Activated naive CD4-positive, alpha-beta T cell treated with anti-CD3 and anti-CD28 coated beads for 36 hours (primary cell): ENCODE measurements at regions of chr19 and their contacts with region 1.

Region 1: DNA sequence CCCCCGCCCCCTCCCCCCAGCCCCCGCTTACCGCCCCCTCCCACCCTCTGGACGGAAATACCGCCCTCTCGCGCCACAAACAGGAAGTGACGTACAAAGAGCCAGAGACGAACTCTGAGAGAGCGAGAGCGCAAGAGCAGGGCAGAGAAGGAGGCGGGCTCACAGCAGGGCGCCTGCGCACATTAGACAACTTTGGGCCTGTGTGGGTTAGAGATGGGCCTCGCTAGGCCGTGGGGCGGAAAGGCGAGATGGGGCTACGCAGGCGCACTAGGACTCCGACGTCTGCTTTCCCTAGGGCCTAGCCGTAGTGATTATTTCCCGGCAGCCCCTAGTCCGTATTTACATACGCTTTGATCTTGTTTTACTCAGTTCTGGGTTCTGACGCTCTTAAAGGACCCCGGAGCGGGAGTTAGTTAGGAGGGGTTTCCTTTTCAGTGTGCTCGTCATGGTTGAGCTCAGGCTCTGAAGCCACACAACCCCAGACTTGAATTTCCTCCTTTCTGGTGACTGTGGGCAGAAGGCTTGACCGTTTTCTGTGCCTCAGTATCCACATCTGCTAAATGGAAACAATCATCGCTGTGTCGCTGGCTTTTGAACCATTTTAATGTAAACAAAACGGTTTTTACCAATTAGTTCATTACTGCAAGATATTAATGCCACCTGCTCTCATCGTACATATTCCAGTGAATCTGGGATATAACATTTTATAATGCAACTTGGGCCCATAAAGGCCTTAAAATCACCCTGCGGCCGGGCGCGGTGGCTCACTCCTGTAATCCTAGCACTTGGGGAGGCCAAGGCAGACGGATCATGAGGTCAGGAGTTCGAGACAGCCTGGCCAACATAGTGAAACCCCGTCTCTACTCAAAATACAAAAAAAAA is 449 bp upstream of the AKT2 start:
- DNase-seq: peak; percentile 99
- H3K4me3 Mint-ChIP-seq: peak overlapping the region; percentile 97
- H3K27ac Mint-ChIP-seq: peak overlapping the region; percentile 99
- H3K4me1 Mint-ChIP-seq: peaks cover 47% of the 10 kb centered on the region
- H3K27me3 Mint-ChIP-seq: no peaks in the 10 kb centered on the region

Region 2: GRCh38 chr19:40190891-40191835 is 94.4 kb before region 1 on chr19 and contains the start of gene MAP3K10:
- CTCF ChIA-PET with region 1: no interaction called
- intact Hi-C with region 1: loop called (anchors 2 kb)
- DNase-seq: peak; percentile 79
- H3K4me3 Mint-ChIP-seq: peak within 1 kb of the TSS; percentile 85
- H3K27ac Mint-ChIP-seq: peak within 1 kb of the TSS; percentile 91
- H3K4me1 Mint-ChIP-seq: peaks cover 30% of the 10 kb centered on the region
- H3K27me3 Mint-ChIP-seq: no peaks in the 10 kb centered on the region
- total RNA-seq, gene MAP3K10: 8.4 to 9.3 TPM

Region 3: DNA sequence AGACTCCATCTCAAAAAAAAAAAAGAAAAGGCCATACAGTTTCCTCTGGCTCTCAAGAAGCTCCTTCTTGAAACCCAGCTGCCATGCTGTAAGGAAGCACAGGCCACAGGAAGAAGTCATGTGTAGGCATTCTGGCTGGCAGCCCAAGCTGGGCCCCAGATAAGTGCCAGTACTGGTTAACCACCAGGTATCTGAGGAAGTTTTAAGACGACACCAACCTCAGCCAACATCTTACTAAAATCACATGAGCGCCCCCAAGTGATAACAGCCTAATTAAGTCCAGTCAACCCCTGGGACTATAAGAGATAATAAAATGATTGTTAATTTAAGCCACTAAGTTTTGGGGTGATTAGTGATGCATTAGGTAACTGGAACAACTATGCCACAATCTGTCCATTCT is 26.9 kb after region 1 on chr19:
- CTCF ChIA-PET with region 1: no interaction called
- intact Hi-C with region 1: no loop called
- DNase-seq: no peak
- H3K4me3 Mint-ChIP-seq: no peak overlapping the region
- H3K27ac Mint-ChIP-seq: no peak overlapping the region
- H3K4me1 Mint-ChIP-seq: no peaks in the 10 kb centered on the region
- H3K27me3 Mint-ChIP-seq: no peaks in the 10 kb centered on the region

Region 4: DNA sequence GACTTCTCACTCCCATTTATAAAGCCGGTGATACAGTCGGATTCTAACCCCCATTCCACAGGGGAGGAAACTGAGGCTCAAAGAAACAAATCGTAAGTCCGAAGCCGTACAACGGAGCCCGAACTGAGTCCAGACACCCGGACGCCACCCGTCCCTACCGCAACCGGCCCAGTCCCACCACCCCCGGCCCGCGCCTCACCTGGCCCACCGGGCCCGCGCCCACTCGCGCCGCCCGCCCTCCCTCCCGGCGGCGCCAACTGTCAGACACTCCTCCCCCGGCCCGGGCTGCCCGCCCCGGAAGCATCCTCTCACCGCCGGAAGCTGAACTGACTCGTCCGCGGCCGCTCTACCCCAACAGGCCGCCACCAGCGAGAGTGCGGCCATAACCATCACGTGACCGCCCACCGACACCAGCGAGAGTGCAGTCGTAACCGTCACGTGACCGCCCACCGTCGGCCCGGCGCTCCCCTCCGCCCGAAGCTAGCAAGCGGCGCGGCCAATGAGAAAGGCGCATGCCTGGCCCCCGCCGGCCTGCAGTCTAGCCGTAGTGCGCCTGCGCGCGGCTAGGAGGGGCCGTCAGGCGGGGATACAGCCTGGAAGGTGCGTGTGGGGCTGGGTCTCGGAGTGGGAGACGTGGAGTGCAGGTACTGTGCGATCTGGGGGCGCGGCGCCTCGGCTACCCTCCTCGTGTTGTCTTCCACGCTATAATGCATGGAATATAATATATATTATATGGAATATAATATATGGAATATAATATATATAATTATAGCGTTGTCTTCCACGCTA is 62.7 kb after region 1 on chr19 and contains the starts of genes C19orf47 and PLD3:
- CTCF ChIA-PET with region 1: no interaction called
- intact Hi-C with region 1: loop called (anchors 1 kb)
- DNase-seq: peak; percentile 99
- H3K4me3 Mint-ChIP-seq: peak within 1 kb of the TSS; percentile 89
- H3K27ac Mint-ChIP-seq: peak within 1 kb of the TSS; percentile 78
- H3K4me1 Mint-ChIP-seq: peaks cover 29% of the 10 kb centered on the region
- H3K27me3 Mint-ChIP-seq: no peaks in the 10 kb centered on the region
- total RNA-seq, gene C19orf47: 13.5 to 14.6 TPM
- total RNA-seq, gene PLD3: 57.6 to 58.2 TPM

Region 5: GRCh38 chr19:40388501-40388900 is 102.9 kb after region 1 on chr19:
- CTCF ChIA-PET with region 1: no interaction called
- intact Hi-C with region 1: no loop called
- DNase-seq: no peak
- H3K4me3 Mint-ChIP-seq: no peak overlapping the region
- H3K27ac Mint-ChIP-seq: no peak overlapping the region
- H3K4me1 Mint-ChIP-seq: no peaks in the 10 kb centered on the region
- H3K27me3 Mint-ChIP-seq: no peaks in the 10 kb centered on the region

Region 6: GRCh38 chr19:40425450-40426287 is 140.1 kb after region 1 on chr19 and contains the start of gene SERTAD1:
- CTCF ChIA-PET with region 1: no interaction called
- intact Hi-C with region 1: loop called (anchors 2 kb)
- DNase-seq: peak; percentile 100
- H3K4me3 Mint-ChIP-seq: peak within 1 kb of the TSS; percentile 89
- H3K27ac Mint-ChIP-seq: peak within 1 kb of the TSS; percentile 97
- H3K4me1 Mint-ChIP-seq: peaks cover 21% of the 10 kb centered on the region
- H3K27me3 Mint-ChIP-seq: no peaks in the 10 kb centered on the region
- total RNA-seq, gene SERTAD1: 8.8 to 9.2 TPM

Region 7: DNA sequence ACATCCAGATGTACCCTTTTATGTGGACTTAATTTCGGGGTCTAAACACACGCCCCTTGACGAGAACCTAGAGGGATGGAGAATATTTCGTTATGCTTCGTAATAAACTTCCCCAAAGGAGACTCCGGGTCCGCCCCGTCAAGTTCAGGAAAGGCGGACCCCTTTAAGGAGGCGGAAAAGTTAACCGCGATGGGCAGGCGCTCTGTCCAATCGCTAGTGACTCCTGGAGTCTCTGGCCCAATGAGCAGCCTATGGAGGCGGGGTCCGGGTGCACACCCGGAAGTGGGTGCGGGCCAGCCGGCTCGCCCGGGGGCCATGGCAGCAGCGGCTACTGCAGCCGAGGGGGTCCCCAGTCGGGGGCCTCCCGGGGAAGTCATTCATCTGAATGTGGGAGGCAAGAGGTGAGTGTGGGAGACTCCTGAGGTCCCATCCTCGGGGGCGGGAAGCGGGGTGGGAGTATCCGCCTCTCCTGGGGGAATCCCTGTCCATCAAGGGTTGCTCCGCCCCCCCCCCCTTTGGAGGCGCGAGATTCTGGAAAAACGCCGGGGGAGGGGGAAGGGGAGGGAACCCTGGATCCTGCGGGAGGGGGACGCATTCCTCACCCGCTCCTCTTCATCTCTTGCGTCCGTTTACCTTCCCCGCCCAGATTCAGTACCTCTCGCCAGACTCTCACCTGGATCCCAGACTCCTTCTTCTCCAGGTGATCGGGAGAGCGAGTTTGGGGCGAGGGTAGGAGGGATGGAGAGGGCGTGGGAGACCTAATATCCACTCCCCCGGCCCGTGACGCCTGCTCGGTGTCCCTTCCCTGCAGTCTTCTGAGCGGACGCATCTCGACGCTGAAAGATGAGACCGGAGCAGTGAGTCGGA is 291.2 kb after region 1 on chr19 and contains the start of gene SHKBP1:
- CTCF ChIA-PET with region 1: no interaction called
- intact Hi-C with region 1: loop called (anchors 1 kb)
- DNase-seq: peak; percentile 96
- H3K4me3 Mint-ChIP-seq: peak within 1 kb of the TSS; percentile 87
- H3K27ac Mint-ChIP-seq: peak within 1 kb of the TSS; percentile 65
- H3K4me1 Mint-ChIP-seq: peaks cover 16% of the 10 kb centered on the region
- H3K27me3 Mint-ChIP-seq: no peaks in the 10 kb centered on the region
- total RNA-seq, gene SHKBP1: 90.1 to 99.4 TPM

Region 8: GRCh38 chr19:40609561-40610395 is 324.2 kb after region 1 on chr19:
- CTCF ChIA-PET with region 1: no interaction called
- intact Hi-C with region 1: loop called (anchors 2 kb)
- DNase-seq: peak; percentile 97
- H3K4me3 Mint-ChIP-seq: peak overlapping the region; percentile 89
- H3K27ac Mint-ChIP-seq: peak overlapping the region; percentile 91
- H3K4me1 Mint-ChIP-seq: peaks cover 67% of the 10 kb centered on the region
- H3K27me3 Mint-ChIP-seq: no peaks in the 10 kb centered on the region